ENCODE measurements at regions of chr14 and their contacts with region 1.

Region 1: DNA sequence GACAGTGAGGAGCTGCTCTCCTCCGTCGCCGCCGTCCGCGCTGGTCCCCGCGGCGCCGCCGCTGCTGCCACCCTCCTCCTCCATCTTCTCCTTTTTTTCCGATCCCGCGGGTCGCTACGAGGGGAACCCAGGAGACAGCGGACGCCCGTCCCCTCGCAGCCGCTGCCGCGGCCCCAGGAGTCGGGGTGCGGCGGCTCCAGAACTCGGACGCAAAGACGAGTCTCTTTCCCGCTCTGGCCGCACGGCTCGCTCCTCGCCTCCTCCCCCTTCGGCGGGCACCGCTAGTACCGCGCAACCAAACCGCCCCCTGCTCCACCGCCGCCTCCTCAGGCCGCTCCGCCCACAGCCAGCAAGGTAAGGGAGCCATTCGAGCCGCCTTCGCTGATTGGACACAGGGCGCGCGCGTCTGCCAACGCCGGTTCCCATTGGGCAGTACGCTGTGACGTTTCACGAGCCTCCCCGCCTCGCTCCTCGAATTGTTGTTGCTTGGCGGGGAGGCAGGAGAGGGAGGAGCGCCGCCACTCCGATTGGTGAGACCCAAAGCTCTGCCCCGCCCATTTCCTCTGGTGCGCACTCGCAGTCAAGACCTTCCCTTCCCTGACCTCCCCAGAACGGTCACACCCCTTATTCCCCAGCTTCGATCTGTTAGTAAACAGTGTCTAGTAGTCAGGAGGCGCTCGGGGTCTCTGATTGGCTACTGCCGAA is at the start of gene RPS6KA5:
- DNase-seq: peak; percentile 100
- H3K4me3 Mint-ChIP-seq: peak within 1 kb of the TSS; percentile 82
- H3K27ac Mint-ChIP-seq: peak within 1 kb of the TSS; percentile 26
- H3K4me1 Mint-ChIP-seq: peaks cover 44% of the 10 kb centered on the region
- H3K27me3 Mint-ChIP-seq: no peaks in the 10 kb centered on the region
- total RNA-seq, gene RPS6KA5: 10.0 to 12.0 TPM

Region 2: DNA sequence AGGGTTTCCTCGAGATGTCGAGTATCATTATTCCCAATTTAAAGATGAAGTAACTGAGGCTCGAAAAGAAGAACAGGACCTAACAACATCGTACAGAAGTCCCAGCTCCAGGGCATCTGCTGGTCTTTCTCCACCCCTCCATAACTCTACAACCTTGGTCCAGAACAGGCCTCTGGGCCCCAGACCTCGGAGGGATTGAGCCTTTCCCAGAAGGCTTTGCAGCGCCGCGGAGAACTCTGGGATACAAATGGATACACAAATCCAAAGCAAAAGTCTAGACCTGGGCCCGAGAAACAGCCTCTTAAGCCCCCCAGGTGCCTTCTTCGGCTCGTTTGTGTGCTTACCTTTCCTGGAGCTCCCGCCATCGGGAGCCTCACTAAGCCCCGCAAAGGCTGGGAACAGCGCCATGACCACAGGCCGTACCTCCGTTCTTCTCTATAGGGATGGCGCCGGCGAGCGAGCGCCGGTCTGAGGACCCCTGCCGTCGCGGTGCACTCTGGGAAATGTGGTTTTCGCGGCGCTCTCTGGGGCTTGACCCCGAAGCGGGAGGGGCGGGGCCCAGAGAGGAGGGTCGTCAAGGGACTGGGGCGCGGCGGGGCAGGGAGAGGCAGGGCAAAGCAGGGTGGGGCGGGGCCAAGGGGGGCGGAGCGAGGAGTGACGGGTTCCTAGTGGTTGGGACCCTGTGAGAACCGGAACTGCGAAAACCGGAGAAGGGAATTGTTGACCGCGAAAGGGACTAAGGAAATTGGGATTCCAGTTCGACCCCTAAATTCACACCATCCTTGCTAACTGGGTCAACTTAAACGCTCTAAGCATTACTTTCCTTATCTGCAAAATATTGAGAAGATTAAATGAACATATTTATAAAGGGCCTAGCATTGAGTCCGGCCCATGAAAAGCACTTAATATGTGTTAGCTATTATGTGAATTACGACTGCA is 728.7 kb before region 1 on chr14 and contains the start of gene NRDE2:
- CTCF ChIA-PET with region 1: no interaction called
- intact Hi-C with region 1: loop called (anchors 5 kb)
- DNase-seq: peak; percentile 98
- H3K4me3 Mint-ChIP-seq: peak within 1 kb of the TSS; percentile 90
- H3K27ac Mint-ChIP-seq: peak within 1 kb of the TSS; percentile 92
- H3K4me1 Mint-ChIP-seq: peaks cover 23% of the 10 kb centered on the region
- H3K27me3 Mint-ChIP-seq: no peaks in the 10 kb centered on the region
- total RNA-seq, gene NRDE2: 22.0 to 23.1 TPM

Region 3: GRCh38 chr14:90758028-90758889 is 302.2 kb before region 1 on chr14:
- CTCF ChIA-PET with region 1: no interaction called
- intact Hi-C with region 1: loop called (anchors 1 kb)
- DNase-seq: peak; percentile 92
- H3K4me3 Mint-ChIP-seq: peak overlapping the region; percentile 76
- H3K27ac Mint-ChIP-seq: peak overlapping the region; percentile 80
- H3K4me1 Mint-ChIP-seq: peaks cover 14% of the 10 kb centered on the region
- H3K27me3 Mint-ChIP-seq: peaks cover 2% of the 10 kb centered on the region

Region 4: DNA sequence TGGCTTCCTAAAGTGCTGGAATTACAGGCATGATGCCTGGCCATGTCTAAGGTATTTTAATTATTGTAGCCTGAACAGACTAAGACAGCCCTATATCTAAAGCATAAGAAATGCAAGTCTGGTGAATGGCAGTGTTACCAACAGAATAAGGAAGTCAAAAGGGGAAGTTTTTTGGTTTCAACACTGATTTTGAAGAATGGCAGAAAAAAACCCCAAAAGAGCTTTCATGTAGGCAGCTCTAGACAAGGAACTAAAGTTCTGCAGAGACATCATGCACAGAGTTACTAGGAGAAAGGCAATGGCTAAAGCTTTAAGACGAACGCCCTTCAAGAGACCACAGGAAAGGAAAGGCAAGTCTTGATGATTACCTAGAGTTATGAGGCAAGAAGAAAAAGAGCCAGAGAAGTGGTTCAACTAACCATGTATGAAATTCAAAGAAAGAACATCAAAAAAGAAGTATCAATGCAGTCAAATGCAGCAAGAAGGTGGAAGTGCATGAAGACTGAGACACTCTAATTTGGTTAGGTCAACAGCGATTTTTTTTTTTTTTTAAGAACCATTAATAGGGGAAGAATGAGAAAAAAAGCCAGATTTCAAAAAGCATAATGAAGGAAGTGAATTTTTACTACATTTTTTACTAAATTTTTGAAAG is 50.9 kb before region 1 on chr14:
- CTCF ChIA-PET with region 1: interaction called, 3 read pairs
- intact Hi-C with region 1: loop called (anchors 1 kb)
- DNase-seq: no peak
- H3K4me3 Mint-ChIP-seq: no peak overlapping the region
- H3K27ac Mint-ChIP-seq: peak overlapping the region; percentile 3
- H3K4me1 Mint-ChIP-seq: peaks cover 40% of the 10 kb centered on the region
- H3K27me3 Mint-ChIP-seq: no peaks in the 10 kb centered on the region

Region 5: DNA sequence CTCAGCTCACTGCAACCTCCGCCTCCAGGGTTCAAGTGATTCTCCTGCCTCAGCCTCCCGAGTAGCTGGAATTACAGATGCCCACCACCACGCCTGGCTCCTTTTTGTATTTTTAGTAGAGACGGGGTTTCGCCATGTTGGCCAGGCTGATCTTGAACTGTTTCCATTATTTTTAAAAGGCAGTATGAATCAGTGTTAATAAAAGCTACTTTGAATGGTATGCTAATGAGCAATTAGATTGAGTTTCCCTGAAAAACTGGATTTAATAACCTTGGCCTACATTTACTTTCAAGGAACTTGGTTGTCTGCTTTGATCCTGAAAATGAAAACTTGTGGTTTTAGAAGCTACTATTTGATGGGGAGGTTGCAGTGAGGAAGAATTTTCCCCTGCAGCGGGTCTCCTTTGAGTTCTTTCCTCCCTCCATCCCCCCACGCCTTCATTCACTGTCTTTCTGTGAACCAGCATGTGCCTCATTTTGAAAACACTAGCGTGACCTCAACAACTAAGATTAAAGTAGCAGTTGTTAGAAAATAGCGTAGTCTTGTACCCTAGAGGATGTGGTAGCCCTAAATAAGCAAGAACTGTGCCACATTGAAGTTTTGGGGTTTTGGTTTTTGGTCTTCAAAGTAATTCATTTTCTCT is 17.7 kb after region 1 on chr14:
- CTCF ChIA-PET with region 1: interaction called, 3 read pairs
- intact Hi-C with region 1: loop called (anchors 1 kb)
- DNase-seq: peak; percentile 77
- H3K4me3 Mint-ChIP-seq: no peak overlapping the region
- H3K27ac Mint-ChIP-seq: peak overlapping the region; percentile 39
- H3K4me1 Mint-ChIP-seq: peaks cover 29% of the 10 kb centered on the region
- H3K27me3 Mint-ChIP-seq: peaks cover 3% of the 10 kb centered on the region

Region 6: GRCh38 chr14:91177073-91178034 is 116.9 kb after region 1 on chr14:
- CTCF ChIA-PET with region 1: interaction called, 14 read pairs
- intact Hi-C with region 1: loop called (anchors 2 kb)
- DNase-seq: peak; percentile 84
- H3K4me3 Mint-ChIP-seq: no peak overlapping the region
- H3K27ac Mint-ChIP-seq: peak overlapping the region; percentile 58
- H3K4me1 Mint-ChIP-seq: peaks cover 9% of the 10 kb centered on the region
- H3K27me3 Mint-ChIP-seq: no peaks in the 10 kb centered on the region

Region 7: GRCh38 chr14:91250912-91251311 is 190.4 kb after region 1 on chr14:
- CTCF ChIA-PET with region 1: no interaction called
- intact Hi-C with region 1: no loop called
- DNase-seq: no peak
- H3K4me3 Mint-ChIP-seq: no peak overlapping the region
- H3K27ac Mint-ChIP-seq: no peak overlapping the region
- H3K4me1 Mint-ChIP-seq: peaks cover 75% of the 10 kb centered on the region
- H3K27me3 Mint-ChIP-seq: no peaks in the 10 kb centered on the region

Region 8: GRCh38 chr14:91303091-91303923 is 242.8 kb after region 1 on chr14:
- CTCF ChIA-PET with region 1: no interaction called
- intact Hi-C with region 1: loop called (anchors 1 kb)
- DNase-seq: peak; percentile 89
- H3K4me3 Mint-ChIP-seq: no peak overlapping the region
- H3K27ac Mint-ChIP-seq: peak overlapping the region; percentile 93
- H3K4me1 Mint-ChIP-seq: peaks cover 58% of the 10 kb centered on the region
- H3K27me3 Mint-ChIP-seq: no peaks in the 10 kb centered on the region

Measured in activated naive CD4-positive, alpha-beta T cell treated with anti-CD3 and anti-CD28 coated beads for 36 hours (primary cell).